Calu3 (cell line): ENCODE measurements at regions of chr4 and their contacts with region 1.

Region 1: GRCh38 chr4:163332500-163333406 is at the start of gene NPY1R:
- DNase-seq: peak; percentile 66
- H3K4me3 Mint-ChIP-seq: peak within 1 kb of the TSS; percentile 69
- H3K27ac Mint-ChIP-seq: peak within 1 kb of the TSS; percentile 68
- H3K4me1 Mint-ChIP-seq: peaks cover 14% of the 10 kb centered on the region
- H3K27me3 Mint-ChIP-seq: no peaks in the 10 kb centered on the region
- CTCF ChIP-seq: peak; percentile 41
- total RNA-seq, gene NPY1R: 6.9 and 11.3 TPM in 2 replicates

Region 2: DNA sequence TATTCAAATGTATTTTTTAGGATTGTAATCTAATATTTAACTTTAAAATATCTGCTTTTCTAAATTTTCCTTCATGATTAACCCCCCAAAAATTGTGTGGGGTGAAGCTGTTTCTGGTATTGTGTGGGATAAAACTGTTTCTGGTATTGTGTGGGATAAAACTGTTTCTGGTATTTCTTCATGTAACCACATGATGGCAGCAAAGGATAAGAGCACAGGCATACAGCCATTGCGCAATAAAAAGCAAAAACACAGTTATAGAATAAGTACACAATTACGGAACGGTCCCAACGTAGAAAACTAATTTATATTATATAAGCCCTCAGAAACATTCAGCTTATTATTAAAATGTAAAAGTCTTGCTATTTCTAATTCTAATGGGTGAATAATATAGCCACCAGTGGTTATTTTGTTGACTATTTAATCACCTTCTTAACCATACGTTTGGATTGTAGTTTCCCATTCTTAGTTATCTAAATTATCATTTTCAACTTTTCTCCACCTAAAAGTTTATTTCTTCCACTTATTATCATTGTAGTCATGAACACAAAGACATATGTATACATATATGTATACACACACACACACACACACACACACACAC is 835.1 kb before region 1 on chr4:
- CTCF ChIA-PET with region 1: interaction called, 4 read pairs
- intact Hi-C with region 1: loop called (anchors 1 kb)
- DNase-seq: no peak
- H3K4me3 Mint-ChIP-seq: no peak overlapping the region
- H3K27ac Mint-ChIP-seq: no peak overlapping the region
- H3K4me1 Mint-ChIP-seq: no peaks in the 10 kb centered on the region
- H3K27me3 Mint-ChIP-seq: no peaks in the 10 kb centered on the region
- CTCF ChIP-seq: peak; percentile 61

Region 3: GRCh38 chr4:163048447-163048846 is 284.3 kb before region 1 on chr4:
- CTCF ChIA-PET with region 1: interaction called, 3 read pairs
- intact Hi-C with region 1: loop called (anchors 2 kb)
- DNase-seq: peak; percentile 2
- H3K4me3 Mint-ChIP-seq: no peak overlapping the region
- H3K27ac Mint-ChIP-seq: no peak overlapping the region
- H3K4me1 Mint-ChIP-seq: no peaks in the 10 kb centered on the region
- H3K27me3 Mint-ChIP-seq: no peaks in the 10 kb centered on the region
- CTCF ChIP-seq: no peak

Region 4: GRCh38 chr4:163107754-163108153 is 225.0 kb before region 1 on chr4:
- CTCF ChIA-PET with region 1: no interaction called
- intact Hi-C with region 1: loop called (anchors 2 kb)
- DNase-seq: peak; percentile 6
- H3K4me3 Mint-ChIP-seq: no peak overlapping the region
- H3K27ac Mint-ChIP-seq: no peak overlapping the region
- H3K4me1 Mint-ChIP-seq: no peaks in the 10 kb centered on the region
- H3K27me3 Mint-ChIP-seq: no peaks in the 10 kb centered on the region
- CTCF ChIP-seq: no peak

Region 5: DNA sequence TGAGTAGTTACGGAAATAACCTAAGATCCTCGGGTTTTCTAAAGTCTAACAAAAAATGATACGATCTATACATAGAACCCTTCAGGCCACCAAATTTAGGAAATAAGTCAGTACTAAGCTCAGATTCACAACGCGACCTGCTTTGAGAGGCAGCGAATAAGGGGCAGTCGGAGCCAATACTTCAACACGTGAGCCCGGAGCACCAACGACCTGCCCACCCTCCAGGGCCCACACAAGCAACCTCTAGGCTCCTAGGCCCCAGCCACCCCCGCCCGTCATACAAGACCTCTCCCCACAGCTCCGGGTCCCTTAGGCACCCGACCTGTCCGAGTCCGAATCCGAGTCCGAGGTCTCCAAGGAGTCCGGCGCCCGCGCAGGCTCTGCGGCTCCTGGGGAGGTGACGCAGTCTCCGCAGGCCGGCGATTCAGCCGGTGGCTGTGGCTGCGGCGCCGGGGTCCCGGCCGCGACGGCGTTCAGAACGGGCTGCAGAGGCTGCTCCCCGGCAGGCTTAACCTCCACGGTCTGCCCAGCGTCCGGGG is 166.6 kb before region 1 on chr4:
- CTCF ChIA-PET with region 1: no interaction called
- intact Hi-C with region 1: loop called (anchors 5 kb)
- DNase-seq: peak; percentile 51
- H3K4me3 Mint-ChIP-seq: peak overlapping the region; percentile 85
- H3K27ac Mint-ChIP-seq: peak overlapping the region; percentile 82
- H3K4me1 Mint-ChIP-seq: peaks cover 24% of the 10 kb centered on the region
- H3K27me3 Mint-ChIP-seq: no peaks in the 10 kb centered on the region
- CTCF ChIP-seq: no peak

Region 6: GRCh38 chr4:163494360-163495162 is 161.8 kb after region 1 on chr4 and contains the start of gene TMA16:
- CTCF ChIA-PET with region 1: interaction called, 6 read pairs
- intact Hi-C with region 1: loop called (anchors 5 kb)
- DNase-seq: peak; percentile 82
- H3K4me3 Mint-ChIP-seq: peak within 1 kb of the TSS; percentile 99
- H3K27ac Mint-ChIP-seq: peak within 1 kb of the TSS; percentile 99
- H3K4me1 Mint-ChIP-seq: peaks cover 15% of the 10 kb centered on the region
- H3K27me3 Mint-ChIP-seq: no peaks in the 10 kb centered on the region
- CTCF ChIP-seq: no peak
- total RNA-seq, gene TMA16: 34.5 and 44.1 TPM in 2 replicates